Astrocyte of the cerebellum (primary cell): ENCODE measurements at regions of chr14 and their contacts with region 1.

Region 1: DNA sequence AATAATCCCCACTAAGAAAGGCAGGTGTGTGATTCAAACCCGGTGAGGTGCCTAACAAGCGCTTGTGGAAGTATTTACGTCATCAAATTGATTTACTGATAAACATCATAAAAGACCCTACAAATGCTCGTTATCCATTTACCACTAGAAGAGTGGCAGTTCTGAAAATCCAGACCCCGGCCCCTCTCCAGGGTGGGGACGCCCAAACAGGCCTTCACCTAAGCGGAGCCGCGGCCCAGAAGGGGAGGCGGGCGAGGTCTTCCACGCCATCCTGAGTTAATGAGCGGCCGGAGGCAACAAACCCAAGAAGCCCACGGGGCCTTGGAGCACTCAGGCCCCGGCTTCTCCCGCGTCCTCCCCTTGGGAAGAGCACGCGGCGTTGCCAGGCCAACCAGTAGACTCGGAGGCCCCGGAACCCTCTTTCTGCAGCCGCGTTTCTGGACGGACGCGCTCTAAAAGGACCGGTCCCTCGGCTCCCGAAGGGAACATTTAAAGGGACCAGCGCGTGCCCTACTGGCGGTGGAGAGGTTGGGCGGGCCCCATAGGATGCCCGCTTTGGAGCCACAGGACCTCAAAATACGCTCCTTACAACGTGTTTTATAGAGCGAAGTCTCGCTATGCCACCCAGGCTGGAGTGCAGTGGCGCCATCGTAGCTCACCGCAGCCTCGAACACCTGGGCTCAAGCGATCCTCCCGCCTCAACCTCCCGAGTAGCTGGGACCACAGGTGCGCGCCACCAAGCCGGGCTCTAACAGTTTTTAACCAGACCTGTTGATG is 3.5 kb downstream of the PTPN21 start:
- DNase-seq: peak; percentile 60
- H3K4me3 ChIP-seq: peak overlapping the region; percentile 55
- CTCF ChIP-seq: peak; percentile 33

Region 2: GRCh38 chr14:88518592-88519512 is 32.4 kb before region 1 on chr14:
- in situ Hi-C with region 1: loop called (anchors 5 kb)
- DNase-seq: peak; percentile 13
- H3K4me3 ChIP-seq: no peak overlapping the region
- CTCF ChIP-seq: no peak

Region 3: GRCh38 chr14:88919502-88919901 is 368.2 kb after region 1 on chr14:
- in situ Hi-C with region 1: no loop called
- DNase-seq: no peak
- H3K4me3 ChIP-seq: no peak overlapping the region
- CTCF ChIP-seq: no peak